CD4-positive, alpha-beta T cell (primary cell): ENCODE measurements at regions of chr17 and their contacts with region 1.

Region 1: DNA sequence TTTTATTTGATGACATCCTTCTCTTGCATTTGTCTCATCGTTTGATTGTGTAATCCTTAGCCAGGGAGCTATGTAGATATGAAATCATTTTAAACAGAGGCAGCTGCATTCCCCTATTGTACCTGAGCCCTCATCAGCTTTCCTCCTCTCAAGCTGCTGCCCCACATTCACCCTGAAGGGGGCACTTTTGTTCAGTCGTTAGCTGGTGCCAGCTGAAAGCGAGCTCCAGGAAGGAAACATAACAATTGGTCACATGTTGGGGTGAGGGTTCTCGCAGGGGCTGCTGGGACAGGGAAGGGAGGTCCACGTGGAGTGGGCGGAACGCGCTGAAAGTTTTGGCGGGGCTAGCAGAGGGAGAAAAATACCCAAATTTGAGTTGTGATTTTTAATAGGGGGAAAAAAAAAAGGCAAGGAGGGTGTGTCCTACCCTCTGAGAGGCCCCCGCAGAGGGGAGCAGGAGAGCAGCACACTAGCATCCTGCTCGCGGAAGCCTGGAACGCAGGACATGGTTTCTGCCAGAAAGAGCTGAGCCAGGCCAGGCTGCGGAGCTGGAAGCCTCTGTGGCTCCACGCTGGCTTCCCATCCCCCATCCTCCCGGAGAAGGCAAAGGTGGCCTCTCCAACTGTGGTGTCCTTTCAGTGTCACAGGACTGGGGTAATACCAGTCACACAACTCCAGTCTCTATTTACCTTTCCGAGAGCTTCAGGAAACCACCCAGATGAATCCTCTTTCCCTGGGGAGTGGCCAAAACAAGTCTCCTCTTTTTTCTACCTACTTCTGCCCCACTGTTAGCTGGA is 8.5 kb upstream of the MSL1 start:
- DNase-seq: peak; percentile 85 to 96 (median 91)
- ATAC-seq: peak; percentile 75
- H3K4me3 ChIP-seq: peak overlapping the region; percentile 49
- H3K4me3 Mint-ChIP-seq: peak overlapping the region; percentile 84
- H3K27ac ChIP-seq: peak overlapping the region; percentile 13 to 50
- H3K27ac Mint-ChIP-seq: peak overlapping the region; percentile 99
- H3K4me1 ChIP-seq: peaks cover 58% of the 10 kb centered on the region
- H3K4me1 Mint-ChIP-seq: peaks cover 56% of the 10 kb centered on the region
- H3K27me3 ChIP-seq: no peaks in the 10 kb centered on the region
- H3K27me3 Mint-ChIP-seq: no peaks in the 10 kb centered on the region
- CTCF ChIP-seq: peak; percentile 72

Region 2: DNA sequence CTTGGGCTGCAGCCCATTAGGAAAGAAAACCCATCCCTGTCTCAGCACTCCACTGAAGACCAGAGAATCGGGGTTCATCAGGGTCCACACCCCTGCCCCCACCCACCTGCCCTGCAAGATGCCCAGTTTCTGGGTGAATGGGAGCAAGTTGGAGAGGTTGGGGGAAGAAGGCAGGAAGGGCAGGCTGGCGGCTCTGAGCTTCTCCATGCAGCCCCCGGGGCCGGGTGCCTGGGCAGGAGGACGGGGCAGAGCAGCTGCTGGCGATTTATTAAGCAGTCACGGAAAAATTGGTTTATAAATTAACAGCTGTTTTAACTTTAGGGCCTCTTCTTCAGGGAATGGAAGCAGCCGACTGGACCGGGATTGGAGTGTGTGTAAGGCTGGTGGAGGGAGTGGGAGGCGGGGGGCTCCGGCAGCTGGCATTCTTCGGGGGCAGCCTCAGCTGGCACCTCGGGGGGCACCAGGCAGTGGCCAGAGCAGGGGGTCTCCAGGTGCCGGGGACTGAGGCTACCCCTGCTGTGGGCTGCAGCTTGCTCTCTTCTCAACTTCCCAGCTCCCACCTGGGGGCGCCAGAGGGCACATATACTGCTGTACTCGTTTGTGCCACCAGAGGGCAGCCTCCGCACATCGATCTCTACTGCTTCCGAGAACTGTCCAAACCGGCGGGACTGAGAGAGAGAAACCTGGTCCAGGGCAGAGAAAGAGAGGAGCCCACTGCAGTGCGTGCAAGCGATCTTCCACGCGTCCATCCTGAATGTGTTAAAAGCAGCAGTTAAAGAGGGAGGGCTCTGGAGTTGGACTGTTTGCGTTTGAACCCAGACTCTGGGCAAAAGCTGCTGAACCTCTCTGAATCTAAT is 491.6 kb before region 1 on chr17:
- CTCF ChIA-PET with region 1: no interaction called
- POLR2A ChIA-PET with region 1: no interaction called
- intact Hi-C with region 1: no loop called
- DNase-seq: peak; percentile 67 to 96 (median 88)
- ATAC-seq: peak; percentile 74
- H3K4me3 ChIP-seq: peak overlapping the region; percentile 25
- H3K4me3 Mint-ChIP-seq: peak overlapping the region; percentile 62
- H3K27ac ChIP-seq: no peak overlapping the region
- H3K27ac Mint-ChIP-seq: peak overlapping the region; percentile 74
- H3K4me1 ChIP-seq: peaks cover 48% of the 10 kb centered on the region
- H3K4me1 Mint-ChIP-seq: peaks cover 25% of the 10 kb centered on the region
- H3K27me3 ChIP-seq: peaks cover 15 to 19% of the 10 kb centered on the region in 2 experiments
- H3K27me3 Mint-ChIP-seq: peaks cover 30% of the 10 kb centered on the region
- CTCF ChIP-seq: peak; percentile 100

Region 3: DNA sequence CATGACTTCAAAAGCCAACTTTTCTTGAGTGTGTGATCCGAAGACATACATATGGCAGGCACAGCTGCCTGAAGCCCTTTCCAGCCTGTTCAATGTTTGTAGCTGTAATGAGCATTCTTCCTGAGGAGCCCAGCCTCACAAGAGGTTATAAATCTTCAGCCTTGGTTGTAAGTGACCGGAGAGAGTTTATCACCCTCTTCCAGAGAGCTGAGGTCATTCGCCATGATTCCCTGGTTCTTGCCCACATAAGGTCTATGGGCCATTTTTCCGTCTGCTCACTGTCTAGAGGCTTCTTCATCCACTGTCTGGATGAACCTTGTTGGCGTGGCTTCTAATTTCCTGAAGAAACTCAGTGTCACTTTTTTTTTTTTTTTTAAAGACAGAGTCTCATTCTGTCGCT is 107.8 kb before region 1 on chr17:
- CTCF ChIA-PET with region 1: no interaction called
- POLR2A ChIA-PET with region 1: no interaction called
- intact Hi-C with region 1: no loop called
- DNase-seq: no peak
- ATAC-seq: no peak
- H3K4me3 ChIP-seq: no peak overlapping the region
- H3K4me3 Mint-ChIP-seq: no peak overlapping the region
- H3K27ac ChIP-seq: no peak overlapping the region
- H3K27ac Mint-ChIP-seq: no peak overlapping the region
- H3K4me1 ChIP-seq: peaks cover 7% of the 10 kb centered on the region
- H3K4me1 Mint-ChIP-seq: peaks cover 8% of the 10 kb centered on the region
- H3K27me3 ChIP-seq: no peaks in the 10 kb centered on the region
- H3K27me3 Mint-ChIP-seq: no peaks in the 10 kb centered on the region
- CTCF ChIP-seq: no peak

Region 4: DNA sequence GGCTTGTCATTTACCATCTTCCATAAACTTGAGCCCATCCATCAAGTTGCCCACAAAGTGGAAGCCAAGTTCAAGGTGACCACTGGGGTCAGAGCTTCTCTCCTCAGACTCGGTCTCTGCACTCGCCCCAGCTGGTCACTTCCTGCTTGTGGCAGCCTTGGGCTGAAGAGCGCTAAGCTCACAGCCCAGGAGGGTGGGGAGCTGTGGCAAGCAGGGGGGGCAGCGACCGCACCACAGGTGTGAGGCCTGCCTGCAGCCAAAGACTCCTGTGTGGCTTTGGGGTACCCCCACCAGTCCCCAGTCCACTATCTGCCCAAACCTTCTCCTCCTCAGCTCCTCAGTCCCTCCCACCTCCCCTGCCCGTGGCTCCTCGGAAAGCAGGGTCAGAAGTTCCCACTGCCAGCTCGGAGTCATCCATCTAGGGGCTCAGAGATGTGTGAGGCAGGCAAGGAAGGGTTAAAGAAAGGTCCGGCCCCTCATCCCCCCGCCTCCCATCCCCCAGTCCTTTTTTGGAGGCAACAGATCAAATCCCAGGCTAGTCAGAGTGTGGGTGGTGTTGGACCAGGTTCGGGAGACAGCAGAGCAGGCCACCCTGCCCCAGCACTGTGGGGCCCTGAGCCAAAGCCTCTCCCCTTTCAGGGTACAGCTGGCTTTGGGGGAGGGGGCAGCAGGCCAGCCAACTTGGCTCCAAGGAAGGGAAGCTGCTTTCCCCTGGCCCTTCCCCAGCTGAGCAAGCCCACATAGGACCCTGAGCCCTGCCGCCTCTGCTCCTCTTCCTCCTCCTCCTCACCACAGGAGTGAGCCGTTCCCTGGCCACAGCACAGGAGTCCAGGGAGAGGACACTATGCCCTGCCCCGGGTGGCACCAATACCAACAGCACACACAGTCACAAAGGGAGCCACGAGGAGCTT is 94.8 kb before region 1 on chr17:
- CTCF ChIA-PET with region 1: interaction called, 6 read pairs
- POLR2A ChIA-PET with region 1: interaction called, 3 read pairs
- intact Hi-C with region 1: loop called in 1 of 2 experiments (anchors 1 kb)
- DNase-seq: no peak
- ATAC-seq: no peak
- H3K4me3 ChIP-seq: no peak overlapping the region
- H3K4me3 Mint-ChIP-seq: no peak overlapping the region
- H3K27ac ChIP-seq: no peak overlapping the region
- H3K27ac Mint-ChIP-seq: no peak overlapping the region
- H3K4me1 ChIP-seq: peaks cover 5% of the 10 kb centered on the region
- H3K4me1 Mint-ChIP-seq: peaks cover 6% of the 10 kb centered on the region
- H3K27me3 ChIP-seq: no peaks in the 10 kb centered on the region
- H3K27me3 Mint-ChIP-seq: no peaks in the 10 kb centered on the region
- CTCF ChIP-seq: no peak

Region 5: GRCh38 chr17:40068917-40069750 is 44.2 kb before region 1 on chr17:
- CTCF ChIA-PET with region 1: interaction called, 38 read pairs
- POLR2A ChIA-PET with region 1: interaction called, 48 read pairs
- intact Hi-C with region 1: loop called (anchors 1 to 5 kb)
- DNase-seq: peak; percentile 68 to 89 (median 80)
- ATAC-seq: peak; percentile 71
- H3K4me3 ChIP-seq: peak overlapping the region; percentile 51
- H3K4me3 Mint-ChIP-seq: peak overlapping the region; percentile 89
- H3K27ac ChIP-seq: peak overlapping the region; percentile 73 to 74
- H3K27ac Mint-ChIP-seq: peak overlapping the region; percentile 96
- H3K4me1 ChIP-seq: peaks cover 85% of the 10 kb centered on the region
- H3K4me1 Mint-ChIP-seq: peaks cover 85% of the 10 kb centered on the region
- H3K27me3 ChIP-seq: no peaks in the 10 kb centered on the region
- H3K27me3 Mint-ChIP-seq: no peaks in the 10 kb centered on the region
- CTCF ChIP-seq: no peak

Region 6: GRCh38 chr17:40086150-40087044 is 26.9 kb before region 1 on chr17:
- CTCF ChIA-PET with region 1: interaction called, 44 read pairs
- POLR2A ChIA-PET with region 1: interaction called, 21 read pairs
- intact Hi-C with region 1: no loop called
- DNase-seq: peak; percentile 46 to 78 (median 59)
- ATAC-seq: peak; percentile 68
- H3K4me3 ChIP-seq: no peak overlapping the region
- H3K4me3 Mint-ChIP-seq: no peak overlapping the region
- H3K27ac ChIP-seq: no peak overlapping the region
- H3K27ac Mint-ChIP-seq: no peak overlapping the region
- H3K4me1 ChIP-seq: peaks cover 9% of the 10 kb centered on the region
- H3K4me1 Mint-ChIP-seq: peaks cover 15% of the 10 kb centered on the region
- H3K27me3 ChIP-seq: no peaks in the 10 kb centered on the region
- H3K27me3 Mint-ChIP-seq: no peaks in the 10 kb centered on the region
- CTCF ChIP-seq: peak; percentile 89

Region 7: GRCh38 chr17:40139566-40140058 is 26.3 kb after region 1 on chr17:
- CTCF ChIA-PET with region 1: interaction called, 19 read pairs
- POLR2A ChIA-PET with region 1: interaction called, 67 read pairs
- intact Hi-C with region 1: loop called (anchors 1 to 2 kb)
- DNase-seq: peak in 2 of 14 experiments; percentile 4
- ATAC-seq: peak; percentile 21
- H3K4me3 ChIP-seq: peak overlapping the region; percentile 59
- H3K4me3 Mint-ChIP-seq: peak overlapping the region; percentile 95
- H3K27ac ChIP-seq: peak overlapping the region; percentile 91 to 93
- H3K27ac Mint-ChIP-seq: peak overlapping the region; percentile 99
- H3K4me1 ChIP-seq: peaks cover 38% of the 10 kb centered on the region
- H3K4me1 Mint-ChIP-seq: peaks cover 46% of the 10 kb centered on the region
- H3K27me3 ChIP-seq: no peaks in the 10 kb centered on the region
- H3K27me3 Mint-ChIP-seq: peaks cover 5% of the 10 kb centered on the region
- CTCF ChIP-seq: no peak

Region 8: DNA sequence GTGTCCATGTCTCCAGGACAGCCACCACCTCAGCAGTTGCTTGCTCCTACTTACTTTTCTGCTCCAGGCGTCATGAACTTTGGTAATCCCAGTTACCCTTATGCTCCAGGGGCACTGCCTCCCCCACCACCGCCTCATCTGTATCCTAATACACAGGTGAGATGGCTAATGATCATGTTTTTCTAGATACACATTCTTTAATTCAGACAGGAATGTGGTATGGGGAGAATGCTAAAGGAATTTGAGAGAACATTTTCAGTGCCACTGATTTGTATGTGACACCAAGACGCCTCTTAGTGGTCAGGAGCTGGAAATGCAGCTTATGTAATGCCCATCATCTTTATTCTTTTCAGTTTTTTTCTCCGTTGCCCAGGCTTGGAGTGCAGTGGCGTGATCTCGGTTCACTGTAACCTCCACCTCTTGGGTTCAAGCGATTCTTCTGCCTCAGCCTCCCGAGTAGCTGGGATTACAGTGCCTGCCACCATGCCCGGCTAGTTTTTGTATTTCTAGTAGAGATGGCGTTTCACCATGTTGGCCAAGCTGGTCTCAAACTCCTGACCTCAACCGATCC is 55.0 kb after region 1 on chr17:
- CTCF ChIA-PET with region 1: interaction called, 96 read pairs
- POLR2A ChIA-PET with region 1: interaction called, 49 read pairs
- intact Hi-C with region 1: loop called (anchors 1 kb)
- DNase-seq: peak in 8 of 14 experiments; percentile 14 to 82 (median 43)
- ATAC-seq: peak; percentile 89
- H3K4me3 ChIP-seq: no peak overlapping the region
- H3K4me3 Mint-ChIP-seq: no peak overlapping the region
- H3K27ac ChIP-seq: no peak overlapping the region
- H3K27ac Mint-ChIP-seq: peak overlapping the region; percentile 80
- H3K4me1 ChIP-seq: no peaks in the 10 kb centered on the region
- H3K4me1 Mint-ChIP-seq: peaks cover 9% of the 10 kb centered on the region
- H3K27me3 ChIP-seq: no peaks in the 10 kb centered on the region
- H3K27me3 Mint-ChIP-seq: no peaks in the 10 kb centered on the region
- CTCF ChIP-seq: peak; percentile 87

Region 9: DNA sequence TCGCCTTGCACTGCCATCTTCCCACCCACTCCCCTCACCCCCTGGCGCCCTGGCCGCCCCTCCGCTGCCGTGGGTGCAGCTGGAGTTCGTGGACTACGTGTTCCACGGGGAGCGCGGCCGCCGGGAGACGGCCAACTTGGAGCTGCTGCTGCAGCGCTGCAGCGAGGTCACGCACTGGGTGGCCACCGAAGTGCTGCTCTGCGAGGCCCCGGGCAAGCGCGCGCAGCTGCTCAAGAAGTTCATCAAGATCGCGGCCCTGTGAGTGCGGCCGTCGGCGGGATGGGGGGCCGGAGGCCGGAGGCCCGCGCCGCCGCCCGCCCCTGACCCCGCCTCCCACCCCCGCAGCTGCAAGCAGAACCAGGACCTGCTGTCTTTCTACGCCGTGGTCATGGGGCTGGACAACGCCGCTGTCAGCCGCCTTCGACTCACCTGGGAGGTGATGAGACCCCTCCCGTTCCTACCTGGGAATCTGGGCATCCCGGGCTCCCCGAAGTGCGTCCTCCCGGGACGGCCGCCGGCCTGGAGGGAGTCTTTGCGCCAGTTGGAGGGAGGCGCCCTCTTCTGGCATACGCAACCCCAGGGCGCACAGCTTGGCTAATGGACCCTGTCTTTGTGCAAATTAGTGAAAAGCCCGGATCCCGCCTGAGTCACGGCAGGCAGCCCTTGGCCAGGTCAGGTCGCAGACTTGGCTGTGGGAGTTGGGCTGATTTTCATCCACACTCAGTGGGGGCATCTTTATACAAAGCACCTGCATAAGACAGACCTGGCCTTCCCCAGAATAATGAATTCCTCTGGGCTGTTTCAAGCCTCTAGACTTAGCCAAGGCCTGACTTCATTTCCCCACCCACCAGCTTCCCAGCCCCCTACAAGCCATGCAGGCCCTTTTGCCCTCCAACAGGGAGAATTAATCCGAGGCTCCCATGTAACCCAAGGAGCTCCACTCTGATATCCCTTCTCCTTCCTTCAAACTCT is 78.2 kb after region 1 on chr17:
- CTCF ChIA-PET with region 1: interaction called, 34 read pairs
- POLR2A ChIA-PET with region 1: interaction called, 17 read pairs
- intact Hi-C with region 1: loop called in 1 of 2 experiments (anchors 2 kb)
- DNase-seq: peak; percentile 41 to 82 (median 62)
- ATAC-seq: peak; percentile 79
- H3K4me3 ChIP-seq: peak overlapping the region; percentile 60
- H3K4me3 Mint-ChIP-seq: peak overlapping the region; percentile 96
- H3K27ac ChIP-seq: no peak overlapping the region
- H3K27ac Mint-ChIP-seq: peak overlapping the region; percentile 60
- H3K4me1 ChIP-seq: peaks cover 14% of the 10 kb centered on the region
- H3K4me1 Mint-ChIP-seq: peaks cover 5% of the 10 kb centered on the region
- H3K27me3 ChIP-seq: no peaks in the 10 kb centered on the region
- H3K27me3 Mint-ChIP-seq: no peaks in the 10 kb centered on the region
- CTCF ChIP-seq: peak; percentile 74